ENCODE measurements at regions of chr17 and their contacts with region 1.

Region 1: GRCh38 chr17:34171245-34171818 is 83.8 kb upstream of the CCL2 start:
- DNase-seq: peak; percentile 19
- H3K4me3 ChIP-seq: no peak overlapping the region
- H3K27ac ChIP-seq: no peak overlapping the region
- H3K4me1 ChIP-seq: no peaks in the 10 kb centered on the region
- H3K27me3 ChIP-seq: no peaks in the 10 kb centered on the region
- CTCF ChIP-seq: peak; percentile 70 to 75

Region 2: GRCh38 chr17:33416131-33416530 is 755.2 kb before region 1 on chr17:
- CTCF ChIA-PET with region 1: no interaction called
- dilution Hi-C with region 1: loop called (anchors 10 kb)
- in situ Hi-C with region 1: no loop called
- intact Hi-C with region 1: no loop called
- DNase-seq: no peak
- H3K4me3 ChIP-seq: no peak overlapping the region
- H3K27ac ChIP-seq: no peak overlapping the region
- H3K4me1 ChIP-seq: no peaks in the 10 kb centered on the region
- H3K27me3 ChIP-seq: no peaks in the 10 kb centered on the region
- CTCF ChIP-seq: no peak

Region 3: GRCh38 chr17:34121311-34121710 is 50.0 kb before region 1 on chr17:
- CTCF ChIA-PET with region 1: no interaction called
- dilution Hi-C with region 1: loop called (anchors 5 kb)
- in situ Hi-C with region 1: no loop called
- intact Hi-C with region 1: no loop called
- DNase-seq: no peak
- H3K4me3 ChIP-seq: no peak overlapping the region
- H3K27ac ChIP-seq: no peak overlapping the region
- H3K4me1 ChIP-seq: no peaks in the 10 kb centered on the region
- H3K27me3 ChIP-seq: no peaks in the 10 kb centered on the region
- CTCF ChIP-seq: no peak

Region 4: DNA sequence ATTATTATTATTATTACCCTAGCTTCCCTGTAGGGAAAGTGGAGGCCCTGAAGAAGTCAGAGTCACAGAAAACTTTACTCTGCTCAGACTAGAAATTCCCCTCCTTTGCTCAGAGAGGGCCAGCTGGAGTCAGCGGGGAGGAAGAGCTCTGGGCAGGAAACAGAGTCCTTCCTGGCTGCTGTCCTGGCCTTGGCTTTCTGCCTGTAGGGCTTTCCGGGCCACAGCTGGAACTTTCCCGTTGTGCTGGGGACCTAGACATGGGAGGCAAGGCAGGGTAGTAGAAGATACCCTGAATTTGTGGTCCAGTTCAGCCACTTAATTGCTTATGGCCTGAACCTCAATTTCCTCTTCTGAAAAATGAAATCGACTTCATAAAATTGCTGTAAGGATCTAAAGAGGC is 69.7 kb after region 1 on chr17:
- CTCF ChIA-PET with region 1: no interaction called
- dilution Hi-C with region 1: no loop called
- in situ Hi-C with region 1: no loop called
- intact Hi-C with region 1: no loop called
- DNase-seq: no peak
- H3K4me3 ChIP-seq: no peak overlapping the region
- H3K27ac ChIP-seq: no peak overlapping the region
- H3K4me1 ChIP-seq: no peaks in the 10 kb centered on the region
- H3K27me3 ChIP-seq: no peaks in the 10 kb centered on the region
- CTCF ChIP-seq: no peak